CD4-positive, alpha-beta T cell (primary cell): ENCODE measurements at regions of chr10 and their contacts with region 1.

Region 1: DNA sequence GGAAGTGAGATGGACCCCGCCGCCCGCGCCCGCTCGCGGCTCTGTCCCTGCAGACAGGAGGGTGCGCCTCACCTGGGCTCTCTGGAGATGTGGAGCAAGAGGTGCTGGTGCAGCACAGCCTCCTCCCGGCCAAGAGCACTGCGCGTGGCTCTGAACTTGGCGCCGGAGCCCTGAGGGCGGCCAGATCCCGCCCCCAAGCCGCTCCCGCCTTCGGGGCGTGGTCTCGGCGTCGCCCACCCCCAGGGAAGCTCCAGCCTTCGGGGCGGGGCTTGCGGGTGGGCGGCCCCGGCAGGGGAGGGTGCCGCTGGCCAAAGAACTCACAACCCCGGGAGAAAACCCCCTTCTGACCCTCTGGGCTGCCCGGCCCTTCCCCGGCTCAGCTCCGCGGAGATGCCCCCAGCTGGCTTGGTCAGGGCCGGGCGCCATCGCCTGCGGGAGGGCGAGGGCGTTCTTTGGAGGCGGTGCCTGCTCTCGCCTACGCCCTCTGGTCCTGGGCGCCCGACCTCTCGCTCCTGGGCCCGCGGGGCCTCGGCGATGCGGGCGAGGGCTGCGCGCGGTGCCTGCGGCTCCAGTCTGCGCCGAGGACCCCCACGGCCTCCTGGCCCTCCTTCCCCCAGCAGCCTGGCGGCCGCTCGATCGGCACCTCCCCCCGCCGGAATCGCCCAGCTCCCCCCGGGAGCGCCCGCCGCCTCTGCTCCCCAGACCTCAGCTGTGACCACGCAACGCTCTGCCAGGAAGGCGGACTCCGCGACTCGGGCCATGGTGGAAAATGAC is at the start of gene ZNF488:
- DNase-seq: peak; percentile 30 to 87 (median 67)
- ATAC-seq: peak; percentile 91
- H3K4me3 ChIP-seq: peak within 1 kb of the TSS; percentile 62
- H3K4me3 Mint-ChIP-seq: peak within 1 kb of the TSS; percentile 93
- H3K27ac ChIP-seq: no peak within 1 kb of the TSS
- H3K27ac Mint-ChIP-seq: no peak within 1 kb of the TSS
- H3K4me1 ChIP-seq: peaks cover 8% of the 10 kb centered on the region
- H3K4me1 Mint-ChIP-seq: peaks cover 10% of the 10 kb centered on the region
- H3K27me3 ChIP-seq: peaks cover 9 to 13% of the 10 kb centered on the region in 2 experiments
- H3K27me3 Mint-ChIP-seq: peaks cover 34% of the 10 kb centered on the region
- CTCF ChIP-seq: no peak
- total RNA-seq, gene ZNF488: not detected

Region 2: DNA sequence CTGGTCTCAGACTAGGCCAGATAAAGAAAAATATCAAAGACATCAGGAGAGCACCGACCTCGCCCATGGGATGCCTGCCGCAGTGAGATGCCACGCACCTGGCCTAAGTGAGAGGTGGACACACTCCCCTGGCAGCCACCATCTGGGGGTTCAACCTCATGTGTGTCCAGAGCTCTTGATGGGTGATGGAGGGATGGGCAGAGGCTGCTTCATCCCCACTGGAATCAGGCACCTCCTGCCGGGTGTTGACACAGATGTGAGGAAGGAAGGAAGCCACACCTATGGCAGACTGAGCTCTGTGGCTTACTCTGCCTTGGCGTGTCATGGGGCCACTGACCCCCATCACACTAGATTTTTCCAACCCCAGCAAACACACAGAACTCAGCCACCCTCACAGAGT is 11.6 kb before region 1 on chr10:
- CTCF ChIA-PET with region 1: no interaction called
- POLR2A ChIA-PET with region 1: no interaction called
- intact Hi-C with region 1: no loop called
- DNase-seq: peak in 1 of 14 experiments; percentile 29
- ATAC-seq: no peak
- H3K4me3 ChIP-seq: no peak overlapping the region
- H3K4me3 Mint-ChIP-seq: no peak overlapping the region
- H3K27ac ChIP-seq: no peak overlapping the region
- H3K27ac Mint-ChIP-seq: no peak overlapping the region
- H3K4me1 ChIP-seq: no peaks in the 10 kb centered on the region
- H3K4me1 Mint-ChIP-seq: peaks cover 6% of the 10 kb centered on the region
- H3K27me3 ChIP-seq: peaks cover 12 to 17% of the 10 kb centered on the region in 2 experiments
- H3K27me3 Mint-ChIP-seq: peaks cover 34% of the 10 kb centered on the region
- CTCF ChIP-seq: no peak

Region 3: DNA sequence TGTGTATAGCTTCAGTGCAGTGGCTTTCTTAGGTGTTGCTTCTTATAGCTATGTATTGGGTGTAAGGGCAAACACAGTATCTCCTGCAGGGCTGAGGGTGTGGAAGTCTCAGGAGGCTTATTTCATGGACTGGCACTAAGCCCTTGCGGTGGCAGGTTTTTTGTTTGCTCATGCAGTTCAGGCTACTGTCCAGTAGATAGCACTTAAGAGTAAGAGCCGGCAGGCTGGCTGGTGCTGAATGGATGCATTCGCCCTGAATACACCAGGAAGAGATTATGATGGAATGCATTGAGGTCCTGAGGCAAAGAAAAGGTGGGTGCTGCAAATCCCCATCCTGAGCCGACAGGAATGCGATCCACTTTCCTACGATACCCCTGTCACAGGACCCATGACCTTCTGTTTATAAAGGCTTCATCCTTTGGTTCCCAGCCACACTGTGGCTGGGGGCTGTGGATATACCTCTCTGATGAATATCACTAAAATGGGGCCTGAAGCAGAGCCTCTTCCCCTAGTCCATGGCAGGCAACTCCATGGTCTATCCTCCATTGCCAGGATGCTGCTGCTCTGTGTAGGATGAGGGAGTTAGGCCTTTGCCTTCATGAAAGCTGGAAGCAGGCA is 54.6 kb after region 1 on chr10:
- CTCF ChIA-PET with region 1: no interaction called
- POLR2A ChIA-PET with region 1: no interaction called
- intact Hi-C with region 1: no loop called
- DNase-seq: no peak
- ATAC-seq: no peak
- H3K4me3 ChIP-seq: no peak overlapping the region
- H3K4me3 Mint-ChIP-seq: no peak overlapping the region
- H3K27ac ChIP-seq: no peak overlapping the region
- H3K27ac Mint-ChIP-seq: no peak overlapping the region
- H3K4me1 ChIP-seq: no peaks in the 10 kb centered on the region
- H3K4me1 Mint-ChIP-seq: no peaks in the 10 kb centered on the region
- H3K27me3 ChIP-seq: peaks cover 4 to 8% of the 10 kb centered on the region in 2 experiments
- H3K27me3 Mint-ChIP-seq: peaks cover 21% of the 10 kb centered on the region
- CTCF ChIP-seq: no peak

Region 4: DNA sequence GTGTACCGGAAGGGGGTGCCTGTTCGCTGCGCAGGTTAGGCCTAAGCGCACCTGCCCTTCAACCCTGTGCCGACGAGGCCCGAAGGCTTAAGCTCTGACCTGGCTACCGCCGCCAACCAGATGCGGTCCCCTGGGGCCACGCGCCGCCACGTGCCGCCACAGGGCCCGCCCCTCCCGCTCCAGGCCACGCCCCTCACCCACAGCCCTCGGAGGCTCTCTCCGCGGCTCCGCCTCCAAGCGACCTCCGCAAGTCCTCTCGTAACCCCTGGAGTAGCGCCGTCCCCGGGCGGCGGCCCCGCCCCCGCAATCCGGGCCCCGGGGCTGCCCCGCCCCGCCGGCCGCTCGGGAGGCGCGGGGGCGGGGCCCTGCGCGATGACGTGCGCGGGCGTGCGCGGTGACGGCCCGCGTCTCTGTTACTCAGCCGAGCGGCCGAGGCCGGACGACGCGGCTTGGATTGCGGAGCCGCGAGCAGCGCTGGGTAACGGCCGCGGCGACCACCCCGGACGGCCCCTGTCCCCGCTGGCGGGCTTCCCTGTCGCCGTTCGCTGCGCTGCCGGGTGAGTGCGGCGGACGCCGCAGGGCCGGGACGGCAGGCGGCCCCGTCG is 922.0 kb after region 1 on chr10 and contains the start of gene MAPK8:
- CTCF ChIA-PET with region 1: no interaction called
- POLR2A ChIA-PET with region 1: no interaction called
- intact Hi-C with region 1: loop called in 1 of 2 experiments (anchors 10 kb)
- DNase-seq: peak; percentile 86 to 98 (median 90)
- ATAC-seq: peak; percentile 88
- H3K4me3 ChIP-seq: peak within 1 kb of the TSS; percentile 57
- H3K4me3 Mint-ChIP-seq: peak within 1 kb of the TSS; percentile 91
- H3K27ac ChIP-seq: peak within 1 kb of the TSS; percentile 65 to 86
- H3K27ac Mint-ChIP-seq: peak within 1 kb of the TSS; percentile 93
- H3K4me1 ChIP-seq: peaks cover 15% of the 10 kb centered on the region
- H3K4me1 Mint-ChIP-seq: peaks cover 40% of the 10 kb centered on the region
- H3K27me3 ChIP-seq: no peaks in the 10 kb centered on the region
- H3K27me3 Mint-ChIP-seq: no peaks in the 10 kb centered on the region
- CTCF ChIP-seq: no peak
- total RNA-seq, gene MAPK8: 47.8 to 50.6 TPM